H1 (cell line): ENCODE measurements at regions of chr4 and their contacts with region 1.

Region 1: DNA sequence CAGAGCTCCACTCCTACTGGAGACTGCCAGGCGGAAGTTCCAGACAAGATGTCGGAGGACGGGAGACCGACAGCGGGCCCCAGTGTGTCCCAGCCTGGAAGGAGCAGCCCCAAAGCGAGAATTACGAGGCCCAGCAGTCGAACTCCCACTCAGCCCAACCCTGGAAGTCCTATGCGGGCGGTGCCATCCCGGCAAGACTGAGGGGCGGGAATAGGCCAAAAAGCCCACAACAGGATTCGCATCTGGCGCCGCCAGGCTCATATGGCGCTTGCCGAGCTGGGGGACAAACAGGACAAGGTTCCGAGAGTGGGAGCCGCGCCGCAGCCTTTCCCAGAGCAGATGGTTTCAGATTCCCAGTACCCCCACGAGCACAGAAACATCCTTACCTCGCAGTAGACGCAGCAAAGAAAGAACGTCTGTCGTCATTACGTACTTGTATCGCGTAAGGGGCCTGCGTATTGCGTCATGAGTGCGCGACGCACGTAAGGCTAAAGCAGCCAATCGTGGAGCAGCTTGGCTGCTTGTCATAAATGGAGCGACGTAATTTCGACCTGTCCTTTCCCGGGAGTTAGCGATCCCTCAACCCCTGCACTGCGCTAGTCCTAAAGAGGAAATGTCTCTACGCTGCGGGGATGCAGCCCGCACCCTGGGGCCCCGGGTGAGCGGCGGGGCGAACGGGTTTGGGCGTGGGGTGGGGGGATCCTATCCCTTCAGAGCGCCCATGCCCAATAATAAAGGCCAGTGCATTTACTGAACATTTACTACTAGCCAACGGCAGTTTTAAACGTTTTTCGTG is at the starts of genes LIAS and RPL9:
- DNase-seq: peak; percentile 96
- H3K4me3 ChIP-seq: peak within 1 kb of the TSS; percentile 76 to 95 (median 92)
- H3K27ac ChIP-seq: peak within 1 kb of the TSS; percentile 94
- H3K4me1 ChIP-seq: peaks cover 0 to 4% (median 2%) of the 10 kb centered on the region in 4 experiments; a peak in 2 of 7 replicates
- H3K27me3 ChIP-seq: no peaks in the 10 kb centered on the region
- CTCF ChIP-seq: no peak
- EP300 ChIP-seq: no peak
- POLR2A ChIP-seq: peak; percentile 97 to 99
- RAD21 ChIP-seq: no peak
- total RNA-seq, gene LIAS: 19.8 and 24.9 TPM in 2 replicates
- total RNA-seq, gene RPL9: 1,161 and 1,163 TPM in 2 replicates

Region 2: DNA sequence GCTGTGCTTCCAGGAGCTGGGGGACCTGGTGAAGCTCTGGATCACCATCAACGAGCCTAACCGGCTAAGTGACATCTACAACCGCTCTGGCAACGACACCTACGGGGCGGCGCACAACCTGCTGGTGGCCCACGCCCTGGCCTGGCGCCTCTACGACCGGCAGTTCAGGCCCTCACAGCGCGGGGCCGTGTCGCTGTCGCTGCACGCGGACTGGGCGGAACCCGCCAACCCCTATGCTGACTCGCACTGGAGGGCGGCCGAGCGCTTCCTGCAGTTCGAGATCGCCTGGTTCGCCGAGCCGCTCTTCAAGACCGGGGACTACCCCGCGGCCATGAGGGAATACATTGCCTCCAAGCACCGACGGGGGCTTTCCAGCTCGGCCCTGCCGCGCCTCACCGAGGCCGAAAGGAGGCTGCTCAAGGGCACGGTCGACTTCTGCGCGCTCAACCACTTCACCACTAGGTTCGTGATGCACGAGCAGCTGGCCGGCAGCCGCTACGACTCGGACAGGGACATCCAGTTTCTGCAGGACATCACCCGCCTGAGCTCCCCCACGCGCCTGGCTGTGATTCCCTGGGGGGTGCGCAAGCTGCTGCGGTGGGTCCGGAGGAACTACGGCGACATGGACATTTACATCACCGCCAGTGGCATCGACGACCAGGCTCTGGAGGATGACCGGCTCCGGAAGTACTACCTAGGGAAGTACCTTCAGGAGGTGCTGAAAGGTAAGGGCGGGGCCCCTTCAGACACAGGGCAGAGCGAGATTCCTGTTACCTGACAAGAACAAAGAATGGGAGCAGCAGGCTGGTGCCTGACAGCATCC is 11.7 kb before region 1 on chr4:
- CTCF ChIA-PET with region 1: no interaction called
- POLR2A ChIA-PET with region 1: interaction called, 133 read pairs
- DNase-seq: peak; percentile 74 to 80
- H3K4me3 ChIP-seq: peak overlapping the region; percentile 46 to 63 (median 50)
- H3K27ac ChIP-seq: no peak overlapping the region
- H3K4me1 ChIP-seq: peaks cover 0 to 7% (median 2%) of the 10 kb centered on the region in 4 experiments; a peak in 3 of 7 replicates
- H3K27me3 ChIP-seq: no peaks in the 10 kb centered on the region; a peak in 1 of 7 replicates
- CTCF ChIP-seq: peak; percentile 38 to 53 (median 52)
- EP300 ChIP-seq: no peak
- POLR2A ChIP-seq: peak in 1 of 2 experiments; percentile 60; a peak in 1 of 3 replicates
- RAD21 ChIP-seq: peak in 1 of 2 experiments; percentile 20; a peak in 2 of 4 replicates

Region 3: DNA sequence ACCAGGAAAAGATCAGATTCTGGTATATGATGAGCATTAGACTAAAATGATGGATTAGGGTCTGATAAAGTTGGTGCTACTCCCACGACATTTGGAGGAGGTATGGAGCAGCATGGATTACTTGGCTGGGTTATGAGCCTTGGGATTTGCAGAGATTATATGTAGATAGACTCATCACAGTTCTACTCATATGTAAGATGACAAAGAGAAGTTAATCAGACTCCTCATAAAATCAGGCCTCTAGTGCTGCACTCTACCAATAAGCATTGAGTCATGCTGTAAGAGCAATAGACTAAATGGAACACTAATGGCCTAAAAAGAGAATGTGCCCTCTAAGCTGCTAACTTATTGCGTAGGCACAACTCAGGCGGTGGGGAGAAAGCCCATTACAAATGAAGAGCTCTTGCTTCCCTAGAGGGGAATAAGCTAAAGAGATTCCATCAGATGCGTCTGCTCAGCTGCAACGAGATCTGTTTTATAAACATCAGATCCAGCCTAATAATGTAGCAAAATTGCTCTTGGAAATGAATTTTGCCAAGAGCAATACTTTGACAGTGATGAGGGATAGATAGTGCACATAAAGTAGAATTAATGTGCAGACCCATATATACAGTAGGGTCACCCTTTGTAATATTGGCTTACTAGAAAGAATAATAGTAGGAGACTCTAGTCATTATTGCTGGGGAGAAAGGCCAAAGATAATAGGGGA is 17.6 kb after region 1 on chr4:
- CTCF ChIA-PET with region 1: interaction called, 3 read pairs
- POLR2A ChIA-PET with region 1: interaction called, 15 read pairs
- DNase-seq: no peak
- H3K4me3 ChIP-seq: no peak overlapping the region
- H3K27ac ChIP-seq: no peak overlapping the region
- H3K4me1 ChIP-seq: no peaks in the 10 kb centered on the region
- H3K27me3 ChIP-seq: no peaks in the 10 kb centered on the region
- CTCF ChIP-seq: no peak
- EP300 ChIP-seq: no peak
- POLR2A ChIP-seq: no peak
- RAD21 ChIP-seq: no peak

Region 4: GRCh38 chr4:39559626-39560025 is 100.9 kb after region 1 on chr4:
- CTCF ChIA-PET with region 1: no interaction called
- POLR2A ChIA-PET with region 1: interaction called, 12 read pairs
- DNase-seq: no peak
- H3K4me3 ChIP-seq: no peak overlapping the region
- H3K27ac ChIP-seq: no peak overlapping the region
- H3K4me1 ChIP-seq: peaks cover 0 to 3% (median 0%) of the 10 kb centered on the region in 4 experiments; a peak in 1 of 7 replicates
- H3K27me3 ChIP-seq: no peaks in the 10 kb centered on the region
- CTCF ChIP-seq: no peak
- EP300 ChIP-seq: no peak
- POLR2A ChIP-seq: no peak
- RAD21 ChIP-seq: no peak